Natural killer cell (primary cell): ENCODE measurements at regions of chr2 and their contacts with region 1.

Region 1: GRCh38 chr2:85561317-85561979 is at the start of gene GGCX:
- DNase-seq: peak; percentile 86 to 97
- ATAC-seq: peak; percentile 95 to 98 (median 95)
- H3K4me3 ChIP-seq: peak within 1 kb of the TSS; percentile 67
- H3K4me3 Mint-ChIP-seq: peak within 1 kb of the TSS; percentile 95
- H3K27ac ChIP-seq: peak within 1 kb of the TSS; percentile 71
- H3K27ac Mint-ChIP-seq: peak within 1 kb of the TSS; percentile 91 to 95
- H3K4me1 ChIP-seq: peaks cover 17% of the 10 kb centered on the region
- H3K4me1 Mint-ChIP-seq: peaks cover 19 to 24% of the 10 kb centered on the region in 2 donors
- H3K27me3 ChIP-seq: no peaks in the 10 kb centered on the region
- H3K27me3 Mint-ChIP-seq: no peaks in the 10 kb centered on the region
- CTCF ChIP-seq: no peak
- total RNA-seq, gene GGCX: 21.3 to 21.7 (median 21.4) TPM

Region 2: DNA sequence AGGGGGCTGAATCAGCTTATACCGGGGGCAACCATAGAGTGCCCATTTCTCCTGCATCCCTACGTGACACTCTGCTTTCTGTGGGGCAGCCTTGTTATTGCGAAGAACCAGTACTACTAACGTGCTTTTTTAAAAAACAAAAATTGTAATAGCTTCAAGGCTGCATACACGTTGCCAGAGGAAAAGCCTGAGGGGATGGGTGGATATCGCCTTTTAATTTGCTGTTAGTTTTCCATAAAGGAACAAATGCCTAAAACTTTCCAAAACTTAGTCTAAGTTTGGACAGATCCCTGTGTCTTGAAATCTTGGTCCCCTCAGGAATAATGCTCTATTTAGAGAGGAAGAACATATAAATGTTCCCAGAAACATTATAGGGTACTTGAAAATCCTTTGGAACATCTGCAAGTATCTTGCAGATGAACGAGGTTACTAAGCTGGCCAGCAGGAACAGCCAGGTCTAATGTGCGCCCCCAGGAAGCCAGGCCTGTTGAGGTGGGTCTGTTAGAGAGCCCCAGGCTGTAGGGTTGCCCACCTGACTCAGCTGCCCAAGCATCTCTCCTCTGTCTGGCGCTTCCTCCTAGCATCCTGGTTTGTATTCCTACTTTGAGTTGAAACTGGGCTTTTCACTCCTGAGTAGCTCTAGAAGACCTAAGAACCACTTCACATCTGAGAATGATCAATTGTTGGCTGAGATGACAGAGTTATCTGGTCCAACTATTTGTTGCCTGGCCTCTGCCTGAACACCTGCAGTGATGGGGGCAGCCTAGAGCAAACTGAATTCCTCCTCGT is 330.6 kb before region 1 on chr2:
- intact Hi-C with region 1: no loop called
- DNase-seq: no peak
- ATAC-seq: peak in 1 of 3 donors; percentile 11
- H3K4me3 ChIP-seq: no peak overlapping the region
- H3K4me3 Mint-ChIP-seq: no peak overlapping the region
- H3K27ac ChIP-seq: no peak overlapping the region
- H3K27ac Mint-ChIP-seq: no peak overlapping the region
- H3K4me1 ChIP-seq: no peaks in the 10 kb centered on the region
- H3K4me1 Mint-ChIP-seq: peaks cover 7 to 12% of the 10 kb centered on the region in 2 donors
- H3K27me3 ChIP-seq: peaks cover 2% of the 10 kb centered on the region
- H3K27me3 Mint-ChIP-seq: peaks cover 8 to 19% of the 10 kb centered on the region in 2 donors
- CTCF ChIP-seq: no peak

Region 3: DNA sequence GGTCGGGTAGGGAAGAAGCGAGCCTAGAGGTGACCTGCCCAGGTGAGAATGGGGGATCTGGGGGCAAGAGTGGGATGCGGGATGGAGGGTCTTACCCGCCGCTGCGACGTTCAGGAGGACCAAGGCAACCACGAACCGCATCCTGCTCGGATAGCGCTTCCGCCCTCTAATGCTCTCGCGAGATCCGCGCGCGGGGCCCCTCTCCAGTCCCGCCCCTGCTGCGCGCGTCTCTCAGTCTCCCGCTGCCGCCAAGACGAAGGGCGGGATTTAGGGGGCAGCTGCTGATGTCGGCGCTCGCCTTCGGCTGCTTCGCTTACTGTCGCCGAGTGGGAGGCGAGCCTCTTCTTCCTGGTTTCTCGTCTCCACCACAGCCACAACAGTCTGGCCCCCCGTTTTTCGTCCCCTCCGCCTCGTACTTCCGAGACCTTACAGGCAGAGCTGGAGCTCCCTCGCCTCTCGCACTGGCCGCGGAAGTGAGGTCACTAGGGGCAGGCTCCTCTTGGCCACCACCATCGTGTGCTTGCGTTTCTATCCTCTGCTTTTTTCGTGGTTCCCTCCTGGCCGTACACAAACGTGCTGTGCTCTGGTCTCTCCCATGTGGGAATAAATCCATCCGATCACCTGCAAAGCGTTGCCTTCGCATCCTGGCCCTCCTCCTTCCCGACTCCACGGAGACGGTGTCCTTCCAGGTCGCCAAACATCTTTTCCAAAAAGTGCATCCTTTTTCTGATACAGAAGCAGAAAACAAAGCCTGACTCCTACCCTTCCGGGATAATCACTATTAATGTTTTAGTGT is 233.4 kb before region 1 on chr2 and contains the start of gene TGOLN2:
- intact Hi-C with region 1: loop called (anchors 2 kb)
- DNase-seq: peak; percentile 96 to 97
- ATAC-seq: peak; percentile 91 to 97 (median 92)
- H3K4me3 ChIP-seq: peak within 1 kb of the TSS; percentile 67
- H3K4me3 Mint-ChIP-seq: peak within 1 kb of the TSS; percentile 97
- H3K27ac ChIP-seq: peak within 1 kb of the TSS; percentile 98
- H3K27ac Mint-ChIP-seq: peak within 1 kb of the TSS; percentile 99 to 100
- H3K4me1 ChIP-seq: peaks cover 40% of the 10 kb centered on the region
- H3K4me1 Mint-ChIP-seq: peaks cover 59 to 62% of the 10 kb centered on the region in 2 donors
- H3K27me3 ChIP-seq: no peaks in the 10 kb centered on the region
- H3K27me3 Mint-ChIP-seq: no peaks in the 10 kb centered on the region
- CTCF ChIP-seq: no peak
- total RNA-seq, gene TGOLN2: 190 to 207 (median 194) TPM

Region 4: DNA sequence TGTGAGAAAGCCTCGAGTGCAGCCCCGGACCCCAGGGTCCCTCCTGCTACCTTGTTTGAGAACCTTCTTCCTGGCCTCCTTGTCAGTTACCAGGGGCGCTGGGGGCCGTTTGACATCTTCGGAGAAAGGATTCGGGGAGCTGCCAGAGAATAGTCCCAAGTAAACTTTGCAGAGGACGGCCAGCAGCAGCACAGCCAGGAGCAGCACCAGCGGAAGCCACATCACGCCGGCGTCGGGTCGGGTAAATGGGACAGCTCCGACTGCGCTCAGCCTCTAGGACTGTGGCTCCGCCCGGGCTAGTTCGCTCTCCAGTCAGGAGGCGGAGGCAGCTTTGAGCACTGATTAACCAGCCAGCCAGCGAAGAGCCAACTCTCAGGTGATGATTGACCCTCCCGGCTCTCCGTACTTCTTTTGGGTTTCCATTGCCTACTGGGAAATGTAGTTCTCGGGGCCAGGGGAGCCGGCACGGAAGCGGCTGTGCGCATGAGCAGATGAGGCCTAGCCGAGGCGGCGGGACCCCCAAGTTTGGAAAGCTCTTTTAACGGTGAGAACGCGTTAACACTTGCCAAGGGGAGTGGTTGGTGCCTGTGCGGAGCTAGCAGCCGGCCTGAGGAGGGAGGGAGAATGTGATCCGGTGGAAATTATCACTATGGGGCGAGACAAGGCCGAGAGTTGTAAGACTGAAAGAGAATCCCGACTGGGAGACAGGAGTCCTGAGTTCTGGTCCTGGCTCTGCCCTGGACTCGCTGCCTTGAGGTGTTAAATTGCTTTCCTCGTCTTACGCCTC is 207.0 kb before region 1 on chr2 and contains the starts of genes ELMOD3 and RETSAT:
- intact Hi-C with region 1: loop called (anchors 1 kb)
- DNase-seq: peak; percentile 90 to 99
- ATAC-seq: peak; percentile 97 to 100 (median 97)
- H3K4me3 ChIP-seq: peak within 1 kb of the TSS; percentile 70
- H3K4me3 Mint-ChIP-seq: peak within 1 kb of the TSS; percentile 98
- H3K27ac ChIP-seq: peak within 1 kb of the TSS; percentile 84
- H3K27ac Mint-ChIP-seq: peak within 1 kb of the TSS; percentile 96 to 100
- H3K4me1 ChIP-seq: peaks cover 19% of the 10 kb centered on the region
- H3K4me1 Mint-ChIP-seq: peaks cover 46 to 50% of the 10 kb centered on the region in 2 donors
- H3K27me3 ChIP-seq: no peaks in the 10 kb centered on the region
- H3K27me3 Mint-ChIP-seq: no peaks in the 10 kb centered on the region
- CTCF ChIP-seq: no peak
- total RNA-seq, gene ELMOD3: 22.4 to 33.9 (median 24.8) TPM
- total RNA-seq, gene RETSAT: 22.7 to 36.5 (median 33.9) TPM

Region 5: DNA sequence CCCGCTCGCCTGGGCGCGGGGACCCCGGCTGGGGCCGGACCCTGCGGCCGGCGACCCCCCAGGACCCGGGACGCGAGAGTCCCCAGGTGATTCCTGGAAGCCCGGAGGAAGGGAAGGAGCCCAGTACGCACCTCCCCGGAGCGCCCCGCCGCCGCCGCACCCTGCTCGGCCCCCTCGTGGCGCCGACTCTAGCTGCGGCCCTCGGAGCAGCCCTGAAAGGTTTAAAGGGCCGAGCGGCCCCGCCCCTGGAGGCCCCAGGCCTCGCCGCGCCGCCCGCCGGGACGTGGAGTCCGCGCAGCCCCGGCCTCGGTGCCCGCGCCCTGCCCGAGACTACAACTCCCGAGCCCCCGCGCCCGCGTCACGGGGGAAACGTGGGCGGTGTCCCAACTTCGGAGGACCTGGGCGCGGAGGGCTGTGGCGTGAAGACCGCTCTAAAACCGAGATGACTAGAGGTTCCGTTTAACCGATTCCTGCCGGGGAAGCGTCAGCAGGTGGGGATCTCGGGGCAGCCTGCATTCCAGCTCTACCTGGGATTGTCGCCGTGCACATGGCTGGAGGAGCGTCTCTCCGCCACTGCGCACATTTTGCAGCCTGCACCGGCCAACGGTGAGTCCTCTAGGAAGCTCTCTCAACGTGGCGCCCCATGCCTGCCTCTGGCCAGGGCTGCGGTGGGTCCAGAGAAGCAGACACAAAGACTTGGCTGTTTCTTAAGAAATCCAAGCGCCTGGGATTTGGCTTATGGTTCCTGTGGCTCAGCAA is 41.2 kb after region 1 on chr2 and contains the start of gene TMEM150A:
- intact Hi-C with region 1: loop called (anchors 5 kb)
- DNase-seq: peak; percentile 82 to 89
- ATAC-seq: peak; percentile 97 to 99 (median 97)
- H3K4me3 ChIP-seq: peak within 1 kb of the TSS; percentile 83
- H3K4me3 Mint-ChIP-seq: peak within 1 kb of the TSS; percentile 90
- H3K27ac ChIP-seq: peak within 1 kb of the TSS; percentile 32
- H3K27ac Mint-ChIP-seq: peak within 1 kb of the TSS; percentile 74 to 81
- H3K4me1 ChIP-seq: peaks cover 24% of the 10 kb centered on the region
- H3K4me1 Mint-ChIP-seq: peaks cover 16% of the 10 kb centered on the region in 2 donors
- H3K27me3 ChIP-seq: no peaks in the 10 kb centered on the region
- H3K27me3 Mint-ChIP-seq: no peaks in the 10 kb centered on the region
- CTCF ChIP-seq: peak; percentile 40
- total RNA-seq, gene TMEM150A: 10.4 to 13.3 (median 10.9) TPM

Region 6: GRCh38 chr2:85611705-85612587 is 50.5 kb after region 1 on chr2 and contains the start of gene C2orf68:
- intact Hi-C with region 1: loop called (anchors 1 kb)
- DNase-seq: peak; percentile 81 to 87
- ATAC-seq: peak; percentile 73 to 82 (median 75)
- H3K4me3 ChIP-seq: peak within 1 kb of the TSS; percentile 59
- H3K4me3 Mint-ChIP-seq: peak within 1 kb of the TSS; percentile 98
- H3K27ac ChIP-seq: peak within 1 kb of the TSS; percentile 65
- H3K27ac Mint-ChIP-seq: peak within 1 kb of the TSS; percentile 82 to 93
- H3K4me1 ChIP-seq: peaks cover 32% of the 10 kb centered on the region
- H3K4me1 Mint-ChIP-seq: peaks cover 18 to 23% of the 10 kb centered on the region in 2 donors
- H3K27me3 ChIP-seq: no peaks in the 10 kb centered on the region
- H3K27me3 Mint-ChIP-seq: no peaks in the 10 kb centered on the region
- CTCF ChIP-seq: no peak
- total RNA-seq, gene C2orf68: 36.4 to 60.8 (median 48.4) TPM